Sciatic nerve (tissue), 2 donors: ENCODE measurements at regions of chr17 and their contacts with region 1.

Region 1: DNA sequence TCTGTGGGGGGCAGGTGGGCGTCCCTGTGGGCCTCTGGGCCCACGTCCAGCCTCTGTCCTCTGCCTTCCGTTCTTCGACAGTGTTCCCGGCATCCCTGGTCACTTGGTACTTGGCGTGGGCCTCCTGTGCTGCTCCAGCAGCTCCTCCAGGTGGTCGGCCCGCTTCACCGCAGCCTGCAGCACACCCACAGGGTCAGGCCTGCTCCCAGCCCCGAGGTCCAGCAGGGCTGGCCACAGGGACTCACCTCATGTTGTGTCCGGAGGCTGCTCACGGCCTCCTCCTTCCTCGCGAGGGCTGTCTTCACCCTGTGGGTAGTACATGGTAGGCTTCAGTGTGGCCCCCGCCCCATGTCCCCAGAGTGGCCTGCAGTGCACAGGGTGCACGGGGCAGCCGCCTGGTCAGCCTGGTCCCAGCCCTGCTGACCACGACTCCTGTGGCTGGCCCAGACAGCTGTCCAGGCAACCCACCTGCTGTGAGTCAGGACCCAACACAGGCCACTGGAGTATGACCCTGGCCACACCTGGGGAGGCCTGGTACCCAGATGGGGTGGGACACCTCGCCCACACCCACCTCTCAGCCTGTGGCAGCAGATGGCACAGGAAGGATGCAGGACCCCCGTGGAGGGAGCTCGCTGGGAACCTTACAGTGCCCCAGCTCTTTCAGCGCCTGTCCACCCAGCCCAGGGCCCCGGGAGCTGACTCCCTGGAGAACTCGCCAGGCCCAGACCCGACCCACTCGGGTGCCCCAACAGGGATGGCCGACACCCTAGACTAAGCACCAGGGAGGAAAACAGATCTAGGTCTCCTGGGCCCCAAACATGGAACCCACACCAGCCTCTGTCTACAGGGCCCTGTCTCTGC is 23.9 kb upstream of the AATK start:
- DNase-seq: no peak
- ATAC-seq: peak; percentile 63

Region 2: DNA sequence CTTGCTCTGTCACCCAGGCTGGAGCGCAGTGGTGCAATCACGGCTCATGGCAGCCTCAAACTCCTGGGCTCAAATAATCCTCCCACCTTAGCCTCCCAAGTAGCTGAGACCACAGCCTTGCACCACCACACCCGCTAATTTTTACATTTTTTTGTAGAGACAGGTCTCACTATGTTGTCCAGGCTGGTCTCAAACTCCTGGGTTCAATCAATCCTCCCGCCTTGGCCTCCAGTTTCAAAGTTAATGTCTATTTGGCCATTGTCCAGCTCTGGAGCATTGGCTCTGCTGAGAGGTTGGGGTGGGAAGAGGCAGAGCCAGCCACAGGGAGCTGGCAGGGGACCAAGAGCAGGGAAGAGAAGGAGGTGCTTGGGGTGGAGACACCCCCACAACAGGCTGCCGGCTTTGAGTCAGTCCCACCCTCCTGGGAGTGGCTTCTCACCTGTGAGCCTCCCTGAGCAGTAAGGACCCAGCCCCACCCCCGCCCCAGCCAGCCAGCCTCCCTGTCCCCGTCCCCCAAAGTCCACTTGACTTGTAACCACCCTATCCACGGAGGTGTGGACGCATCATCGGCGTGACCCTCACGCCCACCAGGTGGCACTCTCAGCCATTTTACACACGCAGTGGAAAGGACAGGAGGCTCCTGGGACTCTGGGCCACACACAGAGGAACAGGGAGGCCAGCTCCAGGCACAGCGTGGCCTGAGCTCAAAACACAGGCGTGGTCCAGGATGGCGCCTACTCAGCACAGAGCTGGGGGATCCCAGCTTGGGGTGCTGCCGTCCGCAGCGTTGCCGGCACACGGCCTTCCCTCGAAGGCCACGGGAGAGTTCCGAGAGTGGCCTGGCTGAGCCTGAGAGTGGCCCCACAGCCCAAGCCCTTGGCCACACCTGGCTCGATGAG is 47.4 kb before region 1 on chr17:
- intact Hi-C with region 1: loop called (anchors 5 kb)
- DNase-seq: peak; percentile 93
- ATAC-seq: peak; percentile 92

Region 3: GRCh38 chr17:81635973-81636504 is 446.1 kb after region 1 on chr17:
- intact Hi-C with region 1: no loop called
- DNase-seq: no peak
- ATAC-seq: peak; percentile 6